ENCODE measurements at regions of chr3 and their contacts with region 1.

Region 1: GRCh38 chr3:107690522-107691138 is 167.9 kb downstream of the BBX start:
- DNase-seq: peak; percentile 41
- H3K4me3 ChIP-seq: no peak overlapping the region
- H3K27ac ChIP-seq: no peak overlapping the region
- H3K27me3 ChIP-seq: no peaks in the 10 kb centered on the region
- CTCF ChIP-seq: peak; percentile 64

Region 2: DNA sequence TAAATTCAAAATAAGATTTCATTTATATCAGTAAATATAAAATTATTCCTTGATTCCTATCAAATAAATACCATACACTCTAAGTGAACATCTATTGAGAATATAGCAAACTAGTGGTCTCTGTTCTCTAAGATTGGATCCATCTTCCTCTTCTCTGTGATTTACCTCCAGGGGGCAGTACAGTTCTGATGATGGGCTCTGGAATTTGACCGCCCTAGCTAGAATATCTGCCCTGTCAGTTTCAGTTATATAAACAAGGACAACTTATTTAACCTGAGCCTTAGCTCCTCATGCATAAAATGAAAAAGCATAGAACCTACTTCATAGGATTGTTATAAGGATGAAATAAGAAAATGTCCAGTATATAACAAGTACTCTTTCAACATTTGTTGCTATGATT is 484.5 kb before region 1 on chr3:
- CTCF ChIA-PET with region 1: no interaction called
- POLR2A ChIA-PET with region 1: no interaction called
- DNase-seq: no peak
- H3K4me3 ChIP-seq: no peak overlapping the region
- H3K27ac ChIP-seq: no peak overlapping the region
- H3K27me3 ChIP-seq: no peaks in the 10 kb centered on the region
- CTCF ChIP-seq: peak; percentile 63

Region 3: GRCh38 chr3:107676469-107677309 is 13.9 kb before region 1 on chr3:
- CTCF ChIA-PET with region 1: interaction called, 86 read pairs
- POLR2A ChIA-PET with region 1: no interaction called
- DNase-seq: no peak
- H3K4me3 ChIP-seq: no peak overlapping the region
- H3K27ac ChIP-seq: no peak overlapping the region
- H3K27me3 ChIP-seq: no peaks in the 10 kb centered on the region
- CTCF ChIP-seq: peak; percentile 56

Region 4: GRCh38 chr3:107710851-107711250 is 20.2 kb after region 1 on chr3:
- CTCF ChIA-PET with region 1: interaction called, 33 read pairs
- POLR2A ChIA-PET with region 1: no interaction called
- DNase-seq: no peak
- H3K4me3 ChIP-seq: no peak overlapping the region
- H3K27ac ChIP-seq: no peak overlapping the region
- H3K27me3 ChIP-seq: no peaks in the 10 kb centered on the region
- CTCF ChIP-seq: no peak

Region 5: DNA sequence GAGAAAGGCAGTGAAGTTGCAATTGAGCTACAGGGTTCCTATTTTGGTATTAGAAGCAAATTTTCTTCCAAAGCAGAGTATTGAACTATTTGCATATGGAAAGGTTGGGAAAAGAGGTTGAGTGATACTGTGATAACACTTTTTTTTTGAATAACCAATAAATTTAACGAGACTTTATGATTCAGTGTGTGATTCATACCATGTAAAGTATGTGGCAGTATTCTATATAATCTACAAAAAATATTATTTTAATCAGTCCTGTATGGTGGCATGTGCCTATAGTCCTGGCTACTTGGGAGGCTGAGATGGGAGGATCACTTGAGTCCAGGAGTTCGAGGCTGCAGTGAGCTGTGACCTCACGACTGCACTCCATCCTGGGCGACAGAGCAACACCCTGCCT is 39.1 kb after region 1 on chr3:
- CTCF ChIA-PET with region 1: interaction called, 20 read pairs
- POLR2A ChIA-PET with region 1: no interaction called
- DNase-seq: no peak
- H3K4me3 ChIP-seq: no peak overlapping the region
- H3K27ac ChIP-seq: no peak overlapping the region
- H3K27me3 ChIP-seq: no peaks in the 10 kb centered on the region
- CTCF ChIP-seq: no peak

Region 6: GRCh38 chr3:107753480-107753879 is 62.9 kb after region 1 on chr3:
- CTCF ChIA-PET with region 1: interaction called, 17 read pairs
- POLR2A ChIA-PET with region 1: no interaction called
- DNase-seq: no peak
- H3K4me3 ChIP-seq: no peak overlapping the region
- H3K27ac ChIP-seq: no peak overlapping the region
- H3K27me3 ChIP-seq: no peaks in the 10 kb centered on the region
- CTCF ChIP-seq: peak; percentile 55

Region 7: DNA sequence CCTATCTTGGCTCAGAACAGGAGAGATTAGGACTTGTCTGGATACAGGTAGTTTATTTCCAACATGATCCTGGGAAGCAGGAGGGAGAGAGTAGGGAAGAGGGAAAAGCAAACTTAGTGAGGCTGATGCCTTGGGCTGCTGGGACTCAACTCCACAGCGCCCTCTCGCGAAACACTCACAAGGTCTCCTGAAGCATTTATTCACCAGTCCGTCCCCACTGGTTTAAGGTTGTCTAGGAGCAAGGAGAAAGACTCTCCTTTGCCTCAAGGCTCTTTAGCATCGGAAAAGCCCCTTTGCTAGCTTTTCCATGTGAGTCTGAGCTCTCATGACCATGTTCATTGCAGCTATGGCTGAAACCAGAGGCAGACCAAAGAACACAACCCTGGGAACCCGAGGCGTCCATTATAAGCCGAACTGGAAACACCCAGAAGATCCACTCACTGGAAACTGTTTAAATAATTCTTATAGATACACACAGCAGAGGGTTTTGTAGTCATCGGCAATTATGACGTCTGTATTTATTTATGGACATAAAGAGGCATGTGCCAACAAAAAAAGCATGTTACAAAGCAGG is 155.7 kb after region 1 on chr3:
- CTCF ChIA-PET with region 1: interaction called, 14 read pairs
- POLR2A ChIA-PET with region 1: no interaction called
- DNase-seq: peak; percentile 21
- H3K4me3 ChIP-seq: no peak overlapping the region
- H3K27ac ChIP-seq: no peak overlapping the region
- H3K27me3 ChIP-seq: peaks cover 6% of the 10 kb centered on the region
- CTCF ChIP-seq: peak; percentile 72

Region 8: DNA sequence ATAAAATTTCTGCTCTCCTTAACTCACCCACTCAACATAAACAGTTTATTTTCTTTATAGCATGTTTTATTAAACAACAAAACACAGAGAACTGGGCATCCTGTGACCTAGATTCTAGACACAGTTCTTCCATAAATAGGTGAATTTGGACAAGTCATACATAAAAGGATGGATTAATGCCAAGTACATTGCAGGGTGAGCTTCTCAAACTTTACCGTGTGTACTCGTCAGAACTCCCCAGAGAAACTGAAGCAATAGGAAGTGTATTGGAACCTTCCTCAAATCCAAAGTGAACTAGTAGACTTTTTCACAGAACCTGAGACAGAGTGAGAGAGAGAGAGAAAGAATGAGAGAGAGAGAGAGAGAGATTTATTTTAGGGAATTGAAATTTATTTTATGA is 260.5 kb after region 1 on chr3:
- CTCF ChIA-PET with region 1: no interaction called
- POLR2A ChIA-PET with region 1: no interaction called
- DNase-seq: no peak
- H3K4me3 ChIP-seq: no peak overlapping the region
- H3K27ac ChIP-seq: no peak overlapping the region
- H3K27me3 ChIP-seq: no peaks in the 10 kb centered on the region
- CTCF ChIP-seq: no peak

Measured in AG04450 (cell line).